ENCODE measurements at regions of chr11 and their contacts with region 1.

Region 1: DNA sequence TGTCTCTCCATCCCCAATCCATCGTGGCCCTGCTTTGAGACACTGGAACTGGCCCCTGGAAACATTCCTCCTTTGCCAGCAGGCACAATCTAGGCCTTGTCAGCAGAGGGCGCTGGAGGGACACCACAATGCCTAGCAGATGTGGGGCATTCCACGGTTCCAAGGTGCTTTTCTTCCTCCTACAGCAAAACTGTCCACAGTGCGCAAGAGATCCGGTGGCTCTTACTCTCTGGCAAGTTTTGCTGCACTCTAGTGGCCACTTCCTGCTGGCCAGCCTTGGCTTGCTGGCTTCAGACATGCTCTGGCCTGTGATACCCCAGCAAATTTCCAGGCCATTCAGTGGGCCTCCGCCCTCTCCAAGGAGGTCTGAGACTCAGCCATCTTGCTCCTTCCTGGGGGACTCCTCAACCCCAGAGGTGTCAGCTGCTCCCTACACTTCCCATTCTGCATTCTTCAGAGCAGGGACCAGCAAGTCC is 17.1 kb upstream of the RBM4B start:
- DNase-seq: peak; percentile 82 to 91 (median 85)
- ATAC-seq: peak; percentile 61 to 90 (median 88)
- H3K4me3 ChIP-seq: no peak overlapping the region
- H3K27ac ChIP-seq: peak overlapping the region in 1 of 12 donors; percentile 20
- H3K4me1 ChIP-seq: peaks cover 0 to 7% (median 0%) of the 10 kb centered on the region in 12 donors
- H3K27me3 ChIP-seq: no peaks in the 10 kb centered on the region
- CTCF ChIP-seq: peak; percentile 85 to 94 (median 90)
- POLR2A ChIP-seq: no peak

Region 2: GRCh38 chr11:66790640-66791039 is 95.9 kb after region 1 on chr11:
- intact Hi-C with region 1: no loop called
- DNase-seq: no peak
- ATAC-seq: no peak
- H3K4me3 ChIP-seq: no peak overlapping the region
- H3K27ac ChIP-seq: no peak overlapping the region
- H3K4me1 ChIP-seq: peaks cover 0 to 16% (median 0%) of the 10 kb centered on the region in 12 donors
- H3K27me3 ChIP-seq: no peaks in the 10 kb centered on the region
- CTCF ChIP-seq: no peak
- POLR2A ChIP-seq: no peak

Region 3: DNA sequence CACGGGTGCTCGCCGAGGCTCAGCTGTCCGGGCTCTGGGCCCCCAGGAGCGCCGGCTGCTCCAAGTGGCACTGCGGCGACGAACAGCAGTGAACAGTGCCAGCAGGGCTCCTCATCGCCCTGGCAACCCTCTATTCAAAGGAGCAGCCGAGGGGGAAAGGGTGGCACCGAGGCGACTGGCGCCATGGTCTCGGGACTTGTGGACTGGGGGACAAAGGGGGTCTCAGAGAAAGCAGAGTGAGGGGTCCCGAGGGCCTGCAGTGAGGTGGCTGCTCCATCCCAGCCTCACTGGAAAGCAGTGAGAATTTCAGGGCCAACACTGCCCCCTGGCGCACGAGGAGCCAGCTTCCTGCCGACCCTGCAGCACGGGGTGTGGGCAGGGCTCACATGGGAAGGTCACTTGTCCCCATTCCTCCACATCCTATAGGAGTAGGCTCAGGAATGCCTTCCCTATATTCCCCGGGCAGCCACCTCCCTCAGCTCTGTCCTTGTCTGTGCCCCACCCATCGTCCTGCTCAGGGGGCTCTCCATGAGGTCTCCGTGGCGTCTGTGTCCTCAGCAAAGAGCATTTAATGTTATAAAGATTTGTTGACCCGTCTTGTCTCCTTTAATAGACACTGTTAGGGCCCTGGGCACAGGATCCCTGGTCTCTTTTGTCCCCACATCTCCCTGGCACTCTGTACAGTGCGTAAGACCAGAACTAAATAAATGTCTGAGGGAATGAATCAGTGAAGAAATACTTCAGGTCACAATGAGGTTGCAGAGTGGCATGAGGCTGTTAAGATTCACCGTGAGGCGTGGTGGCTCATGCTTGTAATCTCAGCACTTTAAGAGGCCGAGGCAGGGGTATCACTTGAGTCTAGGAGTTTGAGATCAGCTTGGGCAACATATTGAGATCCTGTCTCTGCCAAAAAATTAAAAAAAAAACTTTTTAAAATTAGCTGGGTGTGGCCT is 188.5 kb after region 1 on chr11:
- intact Hi-C with region 1: loop called in 3 of 10 experiments (anchors 5 kb)
- DNase-seq: peak in 2 of 5 donors; percentile 64 to 81
- ATAC-seq: peak; percentile 14 to 61 (median 44)
- H3K4me3 ChIP-seq: no peak overlapping the region
- H3K27ac ChIP-seq: no peak overlapping the region
- H3K4me1 ChIP-seq: peaks cover 0 to 26% (median 2%) of the 10 kb centered on the region in 12 donors
- H3K27me3 ChIP-seq: no peaks in the 10 kb centered on the region
- CTCF ChIP-seq: peak; percentile 32 to 63 (median 50)
- POLR2A ChIP-seq: no peak

Region 4: GRCh38 chr11:67071420-67072284 is 376.9 kb after region 1 on chr11:
- intact Hi-C with region 1: loop called in 2 of 10 experiments (anchors 5 kb)
- DNase-seq: peak; percentile 64 to 90 (median 77)
- ATAC-seq: peak; percentile 32 to 91 (median 84)
- H3K4me3 ChIP-seq: peak overlapping the region in 10 of 12 donors; percentile 20 to 59 (median 41)
- H3K27ac ChIP-seq: no peak overlapping the region
- H3K4me1 ChIP-seq: peaks cover 0 to 17% (median 0%) of the 10 kb centered on the region in 12 donors
- H3K27me3 ChIP-seq: no peaks in the 10 kb centered on the region
- CTCF ChIP-seq: peak; percentile 79 to 96 (median 88)
- POLR2A ChIP-seq: no peak